Right cardiac atrium (tissue), 5 donors: ENCODE measurements at regions of chr16 and their contacts with region 1.

Region 1: GRCh38 chr16:28069971-28070794 is 6.7 kb upstream of the GSG1L start:
- DNase-seq: peak in 1 of 3 donors; percentile 47
- ATAC-seq: no peak
- H3K4me3 ChIP-seq: no peak overlapping the region
- H3K27ac ChIP-seq: no peak overlapping the region
- H3K4me1 ChIP-seq: no peaks in the 10 kb centered on the region
- H3K27me3 ChIP-seq: no peaks in the 10 kb centered on the region

Region 2: DNA sequence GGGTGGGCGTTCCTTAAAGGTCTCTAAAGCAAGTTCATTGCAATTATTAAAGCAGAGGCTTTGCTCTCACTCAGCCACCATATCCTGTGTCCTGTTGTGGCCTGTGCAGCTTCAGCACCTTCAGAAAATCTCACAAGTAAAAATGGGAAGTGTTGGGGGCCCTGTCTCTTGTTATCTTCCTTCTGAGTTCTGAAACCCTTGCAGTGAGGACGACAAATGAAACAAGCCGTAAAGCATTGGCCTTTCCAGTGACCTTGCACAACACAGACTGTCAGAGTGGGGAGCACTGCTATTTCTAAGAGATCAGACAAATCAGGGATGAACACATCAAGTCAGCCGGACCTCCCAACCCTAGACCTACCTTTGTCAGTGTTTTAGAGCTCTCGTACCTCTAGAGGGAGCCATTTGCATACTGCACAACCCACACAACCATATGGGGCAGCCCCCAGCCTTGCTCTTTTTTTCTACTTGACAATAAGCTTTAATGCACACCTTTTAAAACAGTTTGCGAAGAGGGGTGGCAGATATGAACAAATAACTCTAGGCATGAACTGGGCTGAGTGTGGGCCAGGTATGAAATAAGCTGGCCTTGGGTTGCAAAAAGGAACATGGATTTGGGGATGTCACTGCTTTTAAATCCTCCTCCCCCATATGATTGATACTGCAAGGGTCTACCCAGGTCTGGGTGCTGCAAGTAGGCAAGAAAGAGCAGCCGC is 430.5 kb before region 1 on chr16:
- intact Hi-C with region 1: loop called in 2 of 4 experiments (anchors 10 kb)
- DNase-seq: no peak
- ATAC-seq: peak; percentile 60 to 65
- H3K4me3 ChIP-seq: no peak overlapping the region
- H3K27ac ChIP-seq: no peak overlapping the region
- H3K4me1 ChIP-seq: no peaks in the 10 kb centered on the region
- H3K27me3 ChIP-seq: no peaks in the 10 kb centered on the region

Region 3: DNA sequence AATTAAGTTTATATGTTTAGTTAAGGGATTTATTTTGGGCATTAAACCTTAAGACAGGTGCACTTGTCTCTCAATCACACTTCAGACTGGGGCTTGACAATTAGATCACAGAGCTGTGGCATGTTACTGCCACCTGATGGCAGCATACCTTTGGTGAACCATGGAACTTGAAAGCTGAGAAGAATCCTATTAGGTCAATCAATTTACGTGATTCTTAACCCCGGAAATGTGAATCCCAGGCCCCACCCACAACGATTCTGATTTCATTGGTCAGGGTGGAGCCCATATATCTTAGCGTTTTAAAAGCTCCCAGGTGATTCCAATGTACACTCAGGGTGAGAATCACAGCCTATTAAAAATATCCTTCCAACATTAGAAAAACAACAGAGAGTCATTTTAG is 97.7 kb before region 1 on chr16:
- intact Hi-C with region 1: loop called in 2 of 4 experiments (anchors 5 kb)
- DNase-seq: no peak
- ATAC-seq: peak in 1 of 2 donors; percentile 15
- H3K4me3 ChIP-seq: no peak overlapping the region
- H3K27ac ChIP-seq: no peak overlapping the region
- H3K4me1 ChIP-seq: no peaks in the 10 kb centered on the region
- H3K27me3 ChIP-seq: no peaks in the 10 kb centered on the region